ENCODE measurements at regions of chr5 and their contacts with region 1.

Region 1: DNA sequence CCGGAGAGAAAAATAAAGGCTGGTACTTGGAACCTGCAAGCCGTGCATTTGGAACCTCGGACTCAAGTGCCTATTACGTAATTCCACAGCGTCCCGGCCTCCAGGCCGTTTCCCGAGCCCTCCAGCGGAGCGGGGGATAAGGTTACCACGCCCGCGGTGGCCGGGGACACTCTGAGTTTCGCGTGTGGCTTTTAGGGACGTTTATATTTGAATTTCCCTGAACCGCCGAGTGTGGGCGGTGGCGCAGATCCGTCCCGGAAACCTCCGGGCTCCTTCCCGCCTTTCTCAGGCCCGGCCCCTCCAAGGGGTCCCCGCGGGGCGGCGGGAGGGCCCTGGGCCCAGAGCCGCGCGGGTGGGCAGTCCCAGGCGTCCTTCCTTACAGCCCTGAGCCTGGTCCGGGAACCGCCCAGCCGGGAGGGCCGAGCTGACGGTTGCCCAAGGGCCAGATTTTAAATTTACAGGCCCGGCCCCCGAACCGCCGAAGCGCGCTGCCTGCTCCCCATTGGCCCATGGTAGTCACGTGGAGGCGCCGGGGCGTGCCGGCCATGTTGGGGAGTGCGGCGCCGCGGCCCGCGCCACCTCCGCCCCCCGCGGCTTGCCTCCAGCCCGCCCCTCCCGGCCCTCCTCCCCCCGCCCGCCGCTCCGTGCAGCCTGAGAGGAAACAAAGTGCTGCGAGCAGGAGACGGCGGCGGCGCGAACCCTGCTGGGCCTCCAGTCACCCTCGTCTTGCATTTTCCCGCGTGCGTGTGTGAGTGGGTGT is at the start of gene LMNB1:
- DNase-seq: peak; percentile 98
- ATAC-seq: peak; percentile 96
- H3K4me3 ChIP-seq: peak within 1 kb of the TSS; percentile 57 to 95
- H3K27ac ChIP-seq: peak within 1 kb of the TSS in 1 of 2 donors; percentile 64
- H3K4me1 ChIP-seq: peaks cover 0 to 3% of the 10 kb centered on the region in 2 donors
- H3K27me3 ChIP-seq: no peaks in the 10 kb centered on the region
- total RNA-seq, gene LMNB1: 5.2 to 8.9 TPM

Region 2: GRCh38 chr5:126656396-126657007 is 120.2 kb before region 1 on chr5:
- intact Hi-C with region 1: loop called in 1 of 2 experiments (anchors 5 kb)
- DNase-seq: no peak
- ATAC-seq: no peak
- H3K4me3 ChIP-seq: no peak overlapping the region
- H3K27ac ChIP-seq: no peak overlapping the region
- H3K4me1 ChIP-seq: no peaks in the 10 kb centered on the region
- H3K27me3 ChIP-seq: peaks cover 0 to 1% of the 10 kb centered on the region in 2 donors

Region 3: DNA sequence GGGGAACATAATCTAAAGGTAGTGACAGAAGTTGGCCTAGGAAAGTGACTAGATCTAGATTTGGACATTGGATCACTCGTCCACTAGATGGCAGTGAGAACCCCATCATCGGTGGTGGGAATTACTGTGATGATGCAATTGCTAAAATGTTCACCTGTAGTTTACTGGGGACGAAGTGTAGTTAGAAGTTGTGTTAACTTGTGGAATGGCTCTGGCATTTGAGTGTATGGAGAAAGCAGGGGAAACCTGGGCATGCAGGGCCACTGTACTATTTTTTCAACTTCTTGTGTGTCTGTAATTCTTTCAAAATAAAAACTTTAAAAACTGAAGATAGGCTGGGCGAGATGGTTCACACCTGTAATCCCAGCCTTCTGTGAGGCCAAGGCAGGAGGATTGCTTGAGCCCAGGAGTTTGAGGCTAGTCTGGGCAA is 100.5 kb before region 1 on chr5:
- intact Hi-C with region 1: loop called (anchors 5 kb)
- DNase-seq: no peak
- ATAC-seq: peak; percentile 83
- H3K4me3 ChIP-seq: no peak overlapping the region
- H3K27ac ChIP-seq: no peak overlapping the region
- H3K4me1 ChIP-seq: no peaks in the 10 kb centered on the region
- H3K27me3 ChIP-seq: no peaks in the 10 kb centered on the region